ENCODE measurements at regions of chr1 and their contacts with region 1.

Region 1: DNA sequence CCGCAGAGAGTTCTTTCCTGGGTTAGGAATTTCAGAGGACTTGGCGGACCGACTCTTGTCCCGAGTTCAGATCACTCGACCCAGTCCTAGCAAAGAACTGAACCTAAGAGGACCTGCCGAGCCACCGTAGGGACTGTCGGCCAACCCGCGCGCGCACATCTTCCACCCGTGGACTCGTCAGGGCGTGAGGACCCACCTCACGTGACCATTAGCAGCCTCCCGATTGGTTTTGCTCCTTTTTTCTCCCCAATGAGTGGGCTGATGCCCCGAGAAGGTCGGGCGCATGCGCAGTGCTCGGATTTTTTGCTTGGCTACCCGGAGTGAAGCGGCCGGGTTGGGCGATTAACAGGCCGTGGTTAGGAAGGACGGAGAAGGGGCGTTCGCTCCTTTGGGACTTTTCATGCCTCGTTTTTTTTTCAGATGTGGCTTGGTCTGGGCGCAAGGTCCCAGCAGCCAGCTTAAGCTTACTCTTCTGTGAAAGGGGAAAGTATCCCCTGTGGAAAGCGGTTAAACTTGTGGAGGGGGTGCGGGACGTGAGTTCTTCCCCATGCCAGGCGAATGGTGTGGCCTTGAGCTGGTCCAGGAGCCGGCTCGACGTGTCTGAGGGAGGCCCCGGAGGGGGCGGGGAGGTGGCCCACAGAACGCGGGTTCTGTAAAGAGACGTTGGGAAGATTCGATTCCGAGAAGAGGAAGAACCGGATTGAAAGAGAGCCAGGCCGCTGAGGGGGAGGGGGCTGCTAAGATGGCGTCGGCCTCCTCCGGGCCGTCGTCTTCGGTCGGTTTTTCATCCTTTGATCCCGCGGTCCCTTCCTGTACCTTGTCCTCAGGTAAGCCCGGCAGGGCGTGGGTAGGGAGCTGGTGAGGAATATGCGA is at the start of gene PIP5K1A:
- DNase-seq: peak; percentile 97
- H3K4me3 Mint-ChIP-seq: peak within 1 kb of the TSS; percentile 94
- H3K27ac Mint-ChIP-seq: peak within 1 kb of the TSS; percentile 94
- H3K4me1 Mint-ChIP-seq: peaks cover 35% of the 10 kb centered on the region
- H3K27me3 Mint-ChIP-seq: peaks cover 7% of the 10 kb centered on the region
- total RNA-seq, gene PIP5K1A: 98.9 and 101 TPM in 2 replicates

Region 2: DNA sequence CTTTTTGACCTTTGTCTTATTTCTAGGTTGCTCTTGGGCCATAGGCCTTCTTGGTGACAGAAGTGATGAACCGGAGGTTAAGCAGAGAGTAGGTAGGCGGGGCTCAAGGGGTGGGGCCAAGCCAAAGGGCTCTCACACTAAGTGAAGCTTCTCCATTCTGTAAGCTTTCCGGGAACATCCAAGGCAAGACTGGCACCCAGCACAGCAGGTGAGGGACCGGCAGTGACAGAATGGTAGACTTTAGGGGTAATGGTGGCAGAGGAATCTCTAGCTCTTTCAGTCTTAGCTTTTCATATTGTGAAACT is 42.0 kb before region 1 on chr1 and contains the start of gene TNFAIP8L2:
- intact Hi-C with region 1: loop called (anchors 2 kb)
- DNase-seq: peak; percentile 72
- H3K4me3 Mint-ChIP-seq: peak within 1 kb of the TSS; percentile 92
- H3K27ac Mint-ChIP-seq: peak within 1 kb of the TSS; percentile 99
- H3K4me1 Mint-ChIP-seq: peaks cover 42% of the 10 kb centered on the region
- H3K27me3 Mint-ChIP-seq: no peaks in the 10 kb centered on the region
- total RNA-seq, gene TNFAIP8L2: 38.0 and 38.5 TPM in 2 replicates

Region 3: GRCh38 chr1:151211972-151212705 is 13.6 kb after region 1 on chr1:
- intact Hi-C with region 1: loop called (anchors 1 kb)
- DNase-seq: no peak
- H3K4me3 Mint-ChIP-seq: peak overlapping the region; percentile 69
- H3K27ac Mint-ChIP-seq: peak overlapping the region; percentile 90
- H3K4me1 Mint-ChIP-seq: peaks cover 26% of the 10 kb centered on the region
- H3K27me3 Mint-ChIP-seq: no peaks in the 10 kb centered on the region

Region 4: DNA sequence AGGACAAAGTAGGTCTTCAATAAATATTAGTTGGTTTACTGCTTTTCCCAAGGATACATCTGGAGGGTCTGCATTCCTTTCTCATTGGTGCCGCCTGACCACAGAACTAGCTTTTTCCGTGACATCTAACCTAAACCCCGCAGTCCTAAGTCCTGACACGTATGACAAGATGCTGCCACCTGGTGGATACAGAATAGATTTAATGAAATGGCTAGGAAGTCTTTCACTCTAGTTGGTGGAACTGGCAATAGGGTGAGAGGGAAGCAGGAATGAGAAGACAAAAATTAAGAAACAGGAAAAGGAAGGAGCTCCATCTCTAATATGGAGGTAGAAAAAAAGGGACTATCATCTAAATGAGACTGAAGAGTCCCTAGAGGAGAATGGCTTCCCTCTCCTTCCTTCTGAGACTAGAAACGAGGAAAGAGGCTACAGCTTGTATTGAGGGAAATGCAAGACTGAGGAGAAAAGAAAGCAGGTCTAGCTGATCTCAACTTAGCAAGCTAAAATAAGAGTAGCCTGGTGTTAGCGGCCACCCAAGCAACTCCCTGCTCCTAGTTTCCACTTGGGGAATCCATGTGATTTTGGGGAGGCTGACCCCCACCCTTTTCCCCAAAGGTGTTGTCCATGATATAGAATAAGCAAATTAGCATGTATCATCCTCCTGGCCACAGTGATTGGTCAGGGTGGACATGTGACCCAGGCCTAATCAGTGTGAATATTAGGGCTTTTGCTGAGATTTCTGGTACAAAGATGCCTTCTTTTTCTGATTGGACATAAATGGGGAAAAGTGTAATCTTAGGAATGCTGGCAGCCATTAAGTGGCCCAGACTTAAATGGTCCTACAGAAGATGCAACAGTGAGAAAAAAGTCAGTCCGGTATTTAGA is 142.6 kb after region 1 on chr1:
- intact Hi-C with region 1: loop called (anchors 1 kb)
- DNase-seq: peak; percentile 37
- H3K4me3 Mint-ChIP-seq: no peak overlapping the region
- H3K27ac Mint-ChIP-seq: peak overlapping the region; percentile 46
- H3K4me1 Mint-ChIP-seq: peaks cover 33% of the 10 kb centered on the region
- H3K27me3 Mint-ChIP-seq: no peaks in the 10 kb centered on the region

Region 5: GRCh38 chr1:151399890-151400495 is 201.5 kb after region 1 on chr1:
- intact Hi-C with region 1: loop called (anchors 2 kb)
- DNase-seq: no peak
- H3K4me3 Mint-ChIP-seq: peak overlapping the region; percentile 92
- H3K27ac Mint-ChIP-seq: peak overlapping the region; percentile 99
- H3K4me1 Mint-ChIP-seq: peaks cover 27% of the 10 kb centered on the region
- H3K27me3 Mint-ChIP-seq: peaks cover 3% of the 10 kb centered on the region

Region 6: GRCh38 chr1:151459331-151460046 is 261.0 kb after region 1 on chr1 and contains the start of gene POGZ:
- intact Hi-C with region 1: no loop called
- DNase-seq: peak; percentile 88
- H3K4me3 Mint-ChIP-seq: peak within 1 kb of the TSS; percentile 90
- H3K27ac Mint-ChIP-seq: peak within 1 kb of the TSS; percentile 97
- H3K4me1 Mint-ChIP-seq: peaks cover 21% of the 10 kb centered on the region
- H3K27me3 Mint-ChIP-seq: peaks cover 13% of the 10 kb centered on the region
- total RNA-seq, gene POGZ: 89.1 and 91.1 TPM in 2 replicates

Measured in activated T-helper 1 cell treated with anti-CD3 and anti-CD28 coated beads, Interleukin-12 subunit alpha, Interleukin-12 subunit beta, Interleukin-2, Interleukin-4 antibody, amounts not matched to agents 30 ng/mL and 10 ng/mL and 1 ng/mL, durations not matched to agents 14 hours and 24 hours and 36 hours (primary cell).